ENCODE measurements at regions of chr12 and their contacts with region 1.

Region 1: DNA sequence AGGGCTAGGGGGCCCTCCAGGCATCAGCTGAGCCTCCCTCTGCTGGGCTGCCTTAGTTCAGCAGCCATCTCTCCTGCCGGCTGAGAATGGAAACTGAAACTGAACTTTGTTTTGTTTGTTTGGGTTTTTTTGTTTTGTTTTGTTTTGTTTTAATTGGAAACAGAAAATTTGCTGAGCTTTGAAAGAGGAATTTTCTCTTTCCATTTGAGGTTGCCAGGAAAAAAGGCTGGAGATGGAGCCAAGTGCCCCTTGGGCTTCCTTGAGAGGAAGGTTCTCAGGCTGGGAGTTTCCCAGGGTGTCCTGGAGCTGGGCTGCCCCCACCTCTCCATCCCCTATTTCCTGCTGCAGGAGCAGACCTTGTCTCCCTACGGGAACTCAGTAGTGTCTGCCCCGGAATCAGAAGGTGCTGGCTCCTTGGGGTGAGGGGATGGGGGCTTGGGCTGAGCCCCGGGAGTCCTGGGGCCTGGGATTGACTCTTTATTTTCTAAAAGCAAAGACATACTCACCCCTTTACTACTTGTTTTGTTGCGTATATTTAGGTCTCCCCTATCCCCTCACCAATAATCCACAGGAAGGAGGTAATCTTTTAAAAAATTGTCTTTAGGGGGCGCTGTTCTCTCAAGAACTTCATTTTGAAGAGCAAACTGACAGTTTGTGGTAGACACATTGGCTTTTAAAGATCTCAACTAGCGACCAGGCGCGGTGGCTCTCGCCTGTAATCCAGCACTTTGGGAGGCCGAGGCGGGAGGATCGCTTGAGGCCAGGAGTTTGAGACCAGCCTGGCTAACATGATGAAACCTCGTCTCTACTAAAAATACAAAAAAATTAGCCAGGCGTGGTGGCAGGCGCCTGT is 21.3 kb upstream of the OASL start:
- DNase-seq: peak; percentile 79
- H3K4me3 Mint-ChIP-seq: peak overlapping the region; percentile 78
- H3K27ac Mint-ChIP-seq: peak overlapping the region; percentile 99
- H3K4me1 Mint-ChIP-seq: peaks cover 44% of the 10 kb centered on the region
- H3K27me3 Mint-ChIP-seq: no peaks in the 10 kb centered on the region

Region 2: GRCh38 chr12:121005346-121005815 is 55.0 kb before region 1 on chr12:
- CTCF ChIA-PET with region 1: interaction called, 15 read pairs
- POLR2A ChIA-PET with region 1: no interaction called
- DNase-seq: peak; percentile 63
- H3K4me3 Mint-ChIP-seq: no peak overlapping the region
- H3K27ac Mint-ChIP-seq: peak overlapping the region; percentile 76
- H3K4me1 Mint-ChIP-seq: peaks cover 5% of the 10 kb centered on the region
- H3K27me3 Mint-ChIP-seq: no peaks in the 10 kb centered on the region

Region 3: DNA sequence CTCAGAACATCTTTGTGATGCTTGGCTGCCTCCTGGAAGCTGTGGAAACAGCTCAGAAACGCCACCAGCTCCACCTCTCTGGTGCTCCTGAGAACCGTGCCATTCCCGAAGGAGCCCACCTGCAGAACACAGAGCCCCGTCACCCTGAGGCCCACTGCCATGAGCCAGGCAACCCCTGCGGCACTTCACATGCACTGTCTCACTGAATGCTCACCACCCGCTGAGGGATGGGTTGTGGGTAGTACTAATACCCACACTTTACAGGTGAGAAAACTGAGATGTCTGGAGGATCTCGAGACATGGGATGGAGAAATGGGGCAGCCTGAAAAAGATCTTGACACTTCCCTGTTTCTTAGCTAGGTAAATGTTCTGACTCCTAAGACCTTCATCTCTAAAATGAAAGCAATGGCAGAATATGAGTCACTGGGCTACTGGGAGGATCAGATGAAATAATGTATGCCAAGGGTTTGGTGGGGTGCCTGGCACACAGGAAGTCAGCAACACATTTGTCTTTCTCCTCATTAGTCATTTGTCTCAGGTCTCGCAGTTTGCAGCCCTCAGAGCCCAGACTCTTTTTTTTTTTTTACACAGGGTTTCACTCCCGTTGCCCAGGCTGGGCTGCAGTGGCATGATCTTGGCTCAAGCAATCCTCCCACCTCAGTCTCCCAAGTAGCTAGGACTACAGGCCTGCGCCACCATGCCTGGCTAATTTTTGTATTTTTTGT is 26.6 kb before region 1 on chr12:
- CTCF ChIA-PET with region 1: interaction called, 10 read pairs
- POLR2A ChIA-PET with region 1: interaction called, 4 read pairs
- DNase-seq: peak; percentile 63
- H3K4me3 Mint-ChIP-seq: peak overlapping the region; percentile 55
- H3K27ac Mint-ChIP-seq: peak overlapping the region; percentile 89
- H3K4me1 Mint-ChIP-seq: peaks cover 54% of the 10 kb centered on the region
- H3K27me3 Mint-ChIP-seq: no peaks in the 10 kb centered on the region

Region 4: GRCh38 chr12:121095544-121096198 is 35.3 kb after region 1 on chr12:
- CTCF ChIA-PET with region 1: interaction called, 12 read pairs
- POLR2A ChIA-PET with region 1: no interaction called
- DNase-seq: peak; percentile 80
- H3K4me3 Mint-ChIP-seq: peak overlapping the region; percentile 64
- H3K27ac Mint-ChIP-seq: peak overlapping the region; percentile 83
- H3K4me1 Mint-ChIP-seq: peaks cover 47% of the 10 kb centered on the region
- H3K27me3 Mint-ChIP-seq: peaks cover 15% of the 10 kb centered on the region